ENCODE measurements at regions of chr4 and their contacts with region 1.

Region 1: DNA sequence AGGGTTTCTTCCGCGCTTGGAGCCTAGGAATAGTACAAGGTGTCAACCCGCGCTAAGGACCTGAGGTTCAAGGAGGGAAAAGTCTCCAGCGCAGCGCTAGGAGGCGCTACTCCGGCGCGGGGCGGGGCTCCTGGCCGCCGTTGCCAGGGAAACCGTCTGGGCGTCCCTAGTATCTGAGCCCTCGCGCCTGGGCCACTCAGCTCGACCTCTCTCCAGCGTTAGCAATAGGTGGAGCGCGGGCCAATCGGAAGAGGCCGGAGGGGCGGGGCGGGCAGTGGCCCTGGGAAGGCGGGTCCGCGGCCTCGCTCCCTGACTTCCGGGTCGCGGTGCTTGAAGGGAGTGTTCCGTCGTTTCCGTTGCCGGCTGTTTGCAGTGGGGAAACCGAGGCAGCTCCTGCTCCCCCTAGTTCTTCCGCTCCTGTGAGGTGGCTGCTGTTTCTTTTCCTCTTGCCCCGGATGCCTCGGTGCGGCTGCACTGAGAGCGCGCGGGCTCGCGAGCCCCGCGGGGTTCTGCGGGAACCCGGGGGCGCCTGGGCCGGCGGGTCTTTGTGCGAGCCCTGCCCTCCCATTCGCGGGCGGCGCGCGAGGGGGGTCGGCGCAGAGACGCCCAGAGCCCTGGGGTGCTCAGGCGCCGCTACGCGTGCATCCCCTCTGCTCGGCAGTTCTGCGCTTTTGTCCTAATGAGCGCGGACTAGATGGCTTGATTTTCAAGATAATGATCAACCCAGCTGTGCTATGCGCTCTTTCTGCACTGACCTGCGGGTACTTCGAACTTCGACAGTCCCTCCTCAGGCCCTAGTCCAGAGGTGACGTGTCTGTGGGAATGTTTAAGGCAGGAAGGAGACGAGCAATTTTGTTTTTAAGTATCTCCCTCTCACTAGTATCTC is at the start of gene ELMOD2:
- H3K4me3 Mint-ChIP-seq: peak within 1 kb of the TSS; percentile 92
- H3K27ac Mint-ChIP-seq: peak within 1 kb of the TSS; percentile 91
- H3K4me1 Mint-ChIP-seq: peaks cover 6% of the 10 kb centered on the region
- H3K27me3 Mint-ChIP-seq: no peaks in the 10 kb centered on the region

Region 2: GRCh38 chr4:140373328-140374129 is 150.6 kb before region 1 on chr4 and contains the start of gene SCOC:
- intact Hi-C with region 1: loop called (anchors 1 kb)
- H3K4me3 Mint-ChIP-seq: no peak within 1 kb of the TSS
- H3K27ac Mint-ChIP-seq: no peak within 1 kb of the TSS
- H3K4me1 Mint-ChIP-seq: peaks cover 30% of the 10 kb centered on the region
- H3K27me3 Mint-ChIP-seq: no peaks in the 10 kb centered on the region

Region 3: GRCh38 chr4:140579278-140579677 is 55.2 kb after region 1 on chr4:
- intact Hi-C with region 1: no loop called
- H3K4me3 Mint-ChIP-seq: no peak overlapping the region
- H3K27ac Mint-ChIP-seq: no peak overlapping the region
- H3K4me1 Mint-ChIP-seq: no peaks in the 10 kb centered on the region
- H3K27me3 Mint-ChIP-seq: peaks cover 45% of the 10 kb centered on the region

Region 4: GRCh38 chr4:141220655-141221605 is 696.8 kb after region 1 on chr4 and contains the start of gene ZNF330:
- intact Hi-C with region 1: loop called (anchors 10 kb)
- H3K4me3 Mint-ChIP-seq: peak within 1 kb of the TSS; percentile 93
- H3K27ac Mint-ChIP-seq: peak within 1 kb of the TSS; percentile 97
- H3K4me1 Mint-ChIP-seq: peaks cover 23% of the 10 kb centered on the region
- H3K27me3 Mint-ChIP-seq: no peaks in the 10 kb centered on the region

Measured in dendritic cell treated with granulocyte-macrophage colony-stimulating factor and Interleukin-4, amounts not matched to agents 40 ng/mL and 50 ng/mL, for 4 days (primary cell).